H1 (cell line): ENCODE measurements at regions of chr1 and their contacts with region 1.

Region 1: DNA sequence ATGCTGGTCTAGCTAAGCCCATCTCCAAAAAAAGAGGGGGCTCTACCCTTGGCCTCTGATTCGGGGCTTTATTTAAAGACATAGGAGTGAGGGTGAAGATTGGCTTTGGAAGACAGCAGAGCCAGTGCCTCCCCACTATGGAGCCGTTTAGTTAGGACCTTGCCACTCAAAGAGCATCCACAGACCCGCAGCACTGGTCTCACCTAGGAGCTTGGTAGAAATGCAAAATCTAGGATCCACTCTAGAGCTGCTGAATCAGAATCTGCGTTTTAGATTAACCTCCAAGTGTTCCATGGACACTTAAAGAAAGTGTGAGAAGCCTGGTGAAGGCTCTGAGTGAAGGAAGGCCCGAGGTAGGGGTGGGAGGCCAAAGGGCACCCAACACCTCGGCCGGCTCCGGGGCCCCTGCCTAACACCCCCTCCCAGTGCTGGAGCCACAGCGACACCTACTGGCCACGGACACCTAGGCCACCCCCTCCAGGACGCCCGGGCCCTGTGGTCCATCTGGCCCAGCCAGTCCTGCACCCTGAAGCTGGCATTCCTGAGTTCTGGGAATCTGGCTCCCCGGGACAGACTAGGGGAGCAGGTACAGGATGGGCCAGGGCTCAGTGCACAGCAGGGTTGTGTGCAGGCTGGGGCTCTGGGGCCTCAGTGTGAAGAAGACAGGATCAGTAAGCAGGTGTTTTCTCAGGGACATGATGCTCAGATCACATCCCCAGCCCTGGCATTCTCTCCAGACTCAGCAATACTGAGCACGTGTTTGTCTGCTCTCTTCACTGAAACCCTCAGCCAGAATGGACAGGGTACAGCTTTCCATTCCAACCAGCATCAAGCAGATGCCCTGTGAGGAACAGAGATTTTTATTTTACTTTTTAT is 79.2 kb downstream of the TMEM53 start:
- DNase-seq: peak; percentile 39 to 98
- H3K4me3 ChIP-seq: no peak overlapping the region
- H3K27ac ChIP-seq: no peak overlapping the region
- H3K4me1 ChIP-seq: peaks cover 12 to 23% (median 19%) of the 10 kb centered on the region in 4 experiments
- H3K27me3 ChIP-seq: no peaks in the 10 kb centered on the region
- CTCF ChIP-seq: peak; percentile 94 to 98 (median 96)
- EP300 ChIP-seq: no peak
- POLR2A ChIP-seq: no peak
- RAD21 ChIP-seq: peak; percentile 99

Region 2: DNA sequence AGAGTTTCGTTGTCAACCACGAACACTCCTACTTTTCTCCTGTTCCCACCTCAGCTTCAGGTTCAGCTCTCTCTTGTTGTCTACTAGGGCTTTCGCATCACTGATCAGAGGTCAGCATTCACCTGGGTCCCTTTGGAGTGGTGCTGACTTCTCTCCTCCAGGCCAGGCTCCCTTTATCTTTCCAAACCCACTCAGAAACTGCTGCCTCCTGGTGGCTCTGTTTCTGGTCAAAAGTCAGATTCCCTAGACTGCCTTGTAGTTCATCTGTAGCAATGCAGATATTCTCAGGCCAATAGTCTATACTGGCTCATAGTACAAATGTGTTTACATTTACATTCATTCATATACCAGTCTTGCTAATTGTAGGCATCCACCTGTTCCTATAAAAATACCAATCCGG is 233.6 kb before region 1 on chr1:
- CTCF ChIA-PET with region 1: interaction called, 49 read pairs
- POLR2A ChIA-PET with region 1: no interaction called
- DNase-seq: no peak
- H3K4me3 ChIP-seq: no peak overlapping the region
- H3K27ac ChIP-seq: no peak overlapping the region
- H3K4me1 ChIP-seq: peaks cover 0 to 5% (median 0%) of the 10 kb centered on the region in 4 experiments; a peak in 4 of 7 replicates
- H3K27me3 ChIP-seq: no peaks in the 10 kb centered on the region; a peak in 2 of 7 replicates
- CTCF ChIP-seq: peak in 2 of 3 experiments; percentile 43 to 51; a peak in 3 of 4 replicates
- EP300 ChIP-seq: no peak
- POLR2A ChIP-seq: no peak
- RAD21 ChIP-seq: peak; percentile 27 to 47; a peak in 3 of 4 replicates

Region 3: GRCh38 chr1:44423591-44424537 is 171.2 kb before region 1 on chr1:
- CTCF ChIA-PET with region 1: interaction called, 13 read pairs
- POLR2A ChIA-PET with region 1: interaction called, 3 read pairs
- DNase-seq: no peak
- H3K4me3 ChIP-seq: no peak overlapping the region
- H3K27ac ChIP-seq: no peak overlapping the region
- H3K4me1 ChIP-seq: peaks cover 5 to 36% (median 25%) of the 10 kb centered on the region in 4 experiments
- H3K27me3 ChIP-seq: no peaks in the 10 kb centered on the region; a peak in 1 of 7 replicates
- CTCF ChIP-seq: no peak
- EP300 ChIP-seq: no peak
- POLR2A ChIP-seq: no peak
- RAD21 ChIP-seq: no peak

Region 4: GRCh38 chr1:44553771-44554170 is 41.3 kb before region 1 on chr1:
- CTCF ChIA-PET with region 1: interaction called, 78 read pairs
- POLR2A ChIA-PET with region 1: no interaction called
- DNase-seq: no peak
- H3K4me3 ChIP-seq: no peak overlapping the region
- H3K27ac ChIP-seq: no peak overlapping the region
- H3K4me1 ChIP-seq: peaks cover 0 to 13% (median 3%) of the 10 kb centered on the region in 4 experiments; a peak in 3 of 7 replicates
- H3K27me3 ChIP-seq: no peaks in the 10 kb centered on the region
- CTCF ChIP-seq: no peak
- EP300 ChIP-seq: no peak
- POLR2A ChIP-seq: no peak
- RAD21 ChIP-seq: no peak

Region 5: DNA sequence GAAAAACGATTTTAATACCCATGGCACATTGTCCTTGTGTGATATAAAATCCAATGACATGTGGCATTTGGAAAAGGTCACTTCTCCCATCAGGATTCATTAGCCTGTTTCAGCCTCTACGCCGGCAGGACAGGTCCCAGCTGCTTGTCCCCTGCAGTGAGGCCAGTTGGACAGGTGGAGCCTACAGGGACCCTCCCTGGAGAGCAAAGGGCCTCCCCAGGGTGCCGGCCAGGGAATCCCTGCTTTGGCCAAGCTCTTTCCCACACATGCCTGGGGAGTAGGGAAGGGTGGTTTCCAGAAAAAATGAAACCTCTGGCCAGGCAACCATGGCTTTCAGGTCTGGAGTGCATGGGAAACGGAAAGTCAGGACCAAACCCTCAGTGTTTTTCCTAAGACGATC is 13.9 kb before region 1 on chr1:
- CTCF ChIA-PET with region 1: interaction called, 112 read pairs
- POLR2A ChIA-PET with region 1: interaction called, 3 read pairs
- DNase-seq: no peak
- H3K4me3 ChIP-seq: no peak overlapping the region
- H3K27ac ChIP-seq: no peak overlapping the region
- H3K4me1 ChIP-seq: peaks cover 2 to 12% (median 6%) of the 10 kb centered on the region in 4 experiments
- H3K27me3 ChIP-seq: no peaks in the 10 kb centered on the region; a peak in 1 of 7 replicates
- CTCF ChIP-seq: no peak
- EP300 ChIP-seq: no peak
- POLR2A ChIP-seq: no peak
- RAD21 ChIP-seq: no peak